ENCODE measurements at regions of chr10 and their contacts with region 1.

Region 1: DNA sequence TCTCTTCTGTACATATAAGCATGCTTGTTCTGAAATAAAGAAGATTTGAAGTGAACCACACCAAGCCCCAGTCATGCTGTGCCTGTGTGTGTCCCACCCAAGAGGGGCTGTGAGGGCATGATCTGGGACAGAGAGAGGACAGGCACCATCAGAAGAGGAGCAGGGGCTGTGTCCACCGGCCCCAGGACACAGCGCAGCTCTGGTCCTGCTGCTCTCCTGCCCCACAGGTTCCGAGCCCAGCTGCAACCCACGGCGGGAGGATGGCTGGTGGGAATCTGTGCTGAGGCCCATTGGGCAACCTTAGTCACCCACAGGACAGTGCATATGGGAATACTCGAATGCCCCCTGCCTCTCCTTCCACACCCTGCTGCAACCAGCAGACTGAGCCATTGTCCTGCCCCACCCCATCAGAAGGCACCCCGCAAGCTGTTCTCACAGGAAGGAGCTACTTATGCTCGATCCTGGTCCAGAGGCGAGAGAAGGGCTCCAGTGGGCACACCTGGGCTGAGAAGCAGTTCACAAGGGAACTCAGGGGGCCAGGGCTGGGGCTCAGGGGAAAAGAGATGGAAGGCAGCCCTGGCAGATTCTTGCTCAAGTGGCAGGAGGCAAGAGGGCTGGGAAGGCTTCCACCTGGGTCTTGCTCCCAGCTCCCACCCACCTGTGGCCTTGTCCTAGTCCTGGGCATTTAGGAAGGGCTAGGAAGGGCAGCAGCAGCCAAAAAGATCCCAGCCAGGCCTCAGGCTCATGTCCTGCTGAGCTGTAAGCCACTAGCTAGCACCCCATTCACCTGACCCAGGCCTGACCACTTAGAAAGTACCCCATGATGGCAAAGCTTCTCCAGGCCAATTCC is 31.9 kb downstream of the LDB3 start:
- DNase-seq: no peak
- H3K4me3 ChIP-seq: no peak overlapping the region
- CTCF ChIP-seq: no peak

Region 2: DNA sequence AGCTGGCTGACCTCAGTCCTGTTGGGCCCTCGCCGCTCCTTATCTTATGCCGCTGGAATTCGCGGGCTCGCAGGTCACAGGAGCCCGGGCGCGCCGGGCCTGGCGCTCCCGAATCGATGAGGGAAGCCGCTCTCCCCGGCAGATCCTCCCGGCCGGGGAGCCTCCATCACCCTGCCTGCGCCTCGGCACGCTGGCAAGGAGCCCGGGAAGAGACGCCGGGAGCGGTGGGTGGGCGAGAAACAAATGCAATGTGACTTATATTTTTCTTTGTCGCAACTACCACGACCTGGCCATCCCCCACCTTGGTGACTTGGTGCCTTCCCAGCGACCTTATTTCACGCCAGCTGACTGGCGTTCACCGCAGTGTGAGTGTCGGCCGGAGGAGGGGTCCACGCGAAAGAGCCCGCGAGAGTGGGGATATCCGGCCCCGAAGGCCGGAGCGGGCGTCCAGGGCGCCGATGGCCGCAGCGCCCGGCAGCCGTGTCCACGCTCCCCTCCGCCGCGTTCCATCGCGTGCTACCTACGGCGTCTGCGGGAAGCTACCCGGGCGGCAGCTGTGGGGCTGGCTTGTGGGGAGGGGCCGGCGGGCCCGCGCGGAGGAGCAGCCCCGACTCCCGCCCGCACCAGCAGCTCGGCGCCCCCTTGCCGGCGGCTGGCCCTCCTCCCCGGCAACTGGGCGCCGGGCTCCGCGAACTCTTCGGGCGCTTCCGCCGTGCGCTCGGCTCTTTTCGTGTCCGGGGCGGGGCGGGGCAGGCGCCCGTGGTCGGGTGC is 55.7 kb after region 1 on chr10:
- in situ Hi-C with region 1: no loop called
- DNase-seq: no peak
- H3K4me3 ChIP-seq: peak overlapping the region; percentile 77
- CTCF ChIP-seq: no peak

Region 3: DNA sequence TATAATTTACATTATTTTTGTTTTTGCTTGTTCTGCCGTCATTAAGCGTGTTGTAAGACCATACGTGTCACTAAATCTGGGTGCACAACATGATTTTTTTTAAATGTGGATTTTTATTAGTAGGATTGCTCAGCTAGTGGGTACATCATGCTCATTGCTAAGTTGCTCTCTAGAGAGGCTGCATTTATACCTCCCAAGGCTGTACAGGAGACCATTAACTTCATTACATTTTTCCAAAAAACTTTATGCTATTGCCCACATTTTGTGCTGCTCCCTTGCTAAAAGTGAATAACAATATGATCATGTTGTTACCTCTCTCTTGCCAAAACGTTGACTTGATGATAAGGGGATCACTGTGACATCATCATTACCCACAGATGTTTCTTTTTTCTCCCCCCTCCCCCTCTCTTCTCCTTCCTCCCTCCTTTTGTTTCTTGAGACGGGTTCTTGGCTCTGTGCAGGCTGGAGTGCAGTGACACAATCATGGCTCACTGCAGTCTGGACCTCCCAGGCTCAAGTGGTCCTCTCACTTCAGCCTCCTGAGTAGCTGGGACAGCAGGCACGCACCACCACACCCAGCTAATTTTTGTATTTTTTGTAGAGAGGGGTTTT is 121.3 kb after region 1 on chr10:
- in situ Hi-C with region 1: no loop called
- DNase-seq: no peak
- H3K4me3 ChIP-seq: no peak overlapping the region
- CTCF ChIP-seq: no peak

Region 4: GRCh38 chr10:86888585-86889381 is 188.6 kb after region 1 on chr10:
- in situ Hi-C with region 1: loop called (anchors 5 kb)
- DNase-seq: no peak
- H3K4me3 ChIP-seq: no peak overlapping the region
- CTCF ChIP-seq: no peak

Measured in astrocyte of the cerebellum (primary cell).